Dorsolateral prefrontal cortex (tissue), 120 donors: ENCODE measurements at regions of chr4 and their contacts with region 1.

Region 1: DNA sequence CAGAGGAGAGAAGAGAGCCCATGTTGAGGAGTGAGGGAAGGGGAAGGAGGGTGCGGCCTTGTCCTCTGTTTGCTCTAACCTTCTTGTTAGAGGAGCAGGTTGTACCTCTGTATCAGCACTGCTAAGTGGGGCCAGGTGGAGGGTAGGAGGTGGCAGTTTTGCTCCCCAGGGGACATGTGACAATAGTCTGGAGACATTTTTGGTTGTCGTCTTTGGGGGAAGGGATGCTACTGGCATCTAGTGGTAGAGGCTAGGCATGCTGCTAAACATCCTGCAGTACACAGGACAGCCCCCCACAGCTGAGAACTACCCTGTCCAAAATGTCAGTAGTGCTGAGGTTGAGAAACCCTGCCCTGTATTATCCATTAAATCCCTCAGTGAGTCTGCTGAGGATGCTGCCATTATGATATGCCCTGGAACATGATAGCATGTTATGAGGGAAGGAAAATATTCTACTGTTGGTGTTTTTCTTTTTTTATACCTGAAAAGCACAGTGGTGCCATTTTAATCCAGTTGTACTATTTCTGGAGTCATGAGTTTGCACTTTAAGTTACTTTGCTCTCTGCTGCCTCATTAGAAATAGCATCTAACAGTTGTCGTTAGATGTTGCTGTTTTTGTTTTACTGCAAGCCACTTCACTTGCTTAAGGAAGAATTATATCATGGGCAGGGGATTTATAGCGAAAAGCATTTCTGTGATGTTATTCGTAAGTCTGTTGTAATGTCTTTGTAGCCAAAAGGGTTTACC is 90.6 kb downstream of the LRP2BP start:
- DNase-seq: peak in 1 of 10 donors; percentile 29
- H3K4me3 ChIP-seq: peak overlapping the region in 9 of 59 donors; percentile 1 to 47 (median 16)
- H3K27ac ChIP-seq: peak overlapping the region in 52 of 59 donors; percentile 7 to 88 (median 74)
- H3K27me3 ChIP-seq: no peaks in the 10 kb centered on the region
- CTCF ChIP-seq: peak in 53 of 56 donors; percentile 29 to 73 (median 56)

Region 2: DNA sequence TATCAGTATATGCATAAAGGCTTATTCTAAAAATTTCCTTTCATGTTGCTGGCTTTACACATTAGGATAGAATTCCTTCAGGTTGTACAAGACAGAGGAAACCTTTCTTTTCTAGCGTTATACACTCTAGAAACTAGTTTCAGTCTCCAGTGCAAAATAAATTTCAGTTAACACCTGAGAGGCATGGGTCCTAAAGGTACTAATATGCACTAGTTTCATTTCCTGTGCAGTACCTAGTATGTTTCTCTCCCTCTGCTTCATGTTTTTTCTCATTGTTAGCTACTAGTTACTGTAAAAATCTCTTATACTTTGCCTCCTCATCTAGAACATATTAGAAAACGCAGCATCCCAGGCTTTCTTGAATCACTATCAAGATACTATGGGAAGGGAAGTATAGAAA is 41.7 kb before region 1 on chr4:
- intact Hi-C with region 1: loop called in 1 of 2 experiments (anchors 5 kb)
- DNase-seq: no peak
- H3K4me3 ChIP-seq: no peak overlapping the region
- H3K27ac ChIP-seq: no peak overlapping the region
- H3K27me3 ChIP-seq: no peaks in the 10 kb centered on the region
- CTCF ChIP-seq: no peak

Region 3: GRCh38 chr4:185343726-185344581 is 38.8 kb after region 1 on chr4:
- intact Hi-C with region 1: no loop called
- DNase-seq: peak in 1 of 10 donors; percentile 14
- H3K4me3 ChIP-seq: no peak overlapping the region
- H3K27ac ChIP-seq: peak overlapping the region in 1 of 59 donors; percentile 6
- H3K27me3 ChIP-seq: no peaks in the 10 kb centered on the region
- CTCF ChIP-seq: no peak

Region 4: DNA sequence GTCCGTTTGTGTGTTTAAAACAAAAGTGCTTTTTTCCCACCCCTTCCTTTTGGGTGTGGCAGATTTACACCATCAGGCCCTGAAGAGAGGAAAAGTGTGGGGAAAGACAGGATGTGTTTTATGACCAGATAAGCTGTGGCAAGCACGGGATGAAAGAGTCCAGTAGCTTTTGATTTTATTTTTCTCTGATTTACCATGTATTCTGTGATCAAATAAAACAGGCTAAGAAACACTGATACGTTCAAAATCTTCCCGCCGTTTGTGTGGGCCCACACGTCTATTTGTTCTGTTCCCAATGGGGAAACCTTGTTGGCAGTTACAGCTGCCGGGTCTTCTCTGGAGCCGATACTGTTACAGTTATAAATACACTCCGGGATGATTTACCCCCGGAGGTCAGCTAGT is 79.8 kb after region 1 on chr4:
- intact Hi-C with region 1: loop called in 1 of 2 experiments (anchors 5 kb)
- DNase-seq: no peak
- H3K4me3 ChIP-seq: no peak overlapping the region
- H3K27ac ChIP-seq: peak overlapping the region in 10 of 59 donors; percentile 1 to 49 (median 36)
- H3K27me3 ChIP-seq: no peaks in the 10 kb centered on the region
- CTCF ChIP-seq: no peak